Naive thymus-derived CD4-positive, alpha-beta T cell (primary cell): ENCODE measurements at regions of chr10 and their contacts with region 1.

Region 1: DNA sequence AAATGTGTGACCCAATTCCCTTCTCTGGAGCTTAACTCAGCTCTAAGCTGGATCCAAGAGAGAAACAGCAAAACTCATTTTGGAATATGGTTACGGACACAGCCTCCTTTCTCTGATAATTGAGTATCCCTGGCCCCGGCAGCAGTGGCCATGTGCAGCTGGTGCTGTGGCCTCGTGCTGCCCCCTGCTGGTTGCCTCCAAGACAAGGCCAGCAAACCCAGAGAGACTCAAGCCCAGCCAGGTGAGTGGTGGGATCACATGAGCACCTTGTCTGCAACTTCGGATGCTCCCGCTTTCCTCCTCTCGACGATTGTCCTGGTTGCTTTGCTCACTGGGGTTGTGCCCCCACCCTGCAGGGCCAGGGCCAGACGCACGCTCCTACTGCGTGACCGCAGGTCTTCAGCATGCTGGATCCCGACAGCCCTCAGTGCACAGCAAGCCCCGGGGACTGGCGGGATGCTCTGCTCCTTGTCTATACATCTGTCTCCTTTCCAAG is 19.4 kb downstream of the SFTPD start:
- DNase-seq: peak; percentile 27 to 81 (median 49)
- ATAC-seq: peak; percentile 84
- H3K4me3 ChIP-seq: no peak overlapping the region
- H3K4me3 Mint-ChIP-seq: no peak overlapping the region
- H3K27ac ChIP-seq: no peak overlapping the region
- H3K27ac Mint-ChIP-seq: no peak overlapping the region
- H3K4me1 ChIP-seq: no peaks in the 10 kb centered on the region
- H3K4me1 Mint-ChIP-seq: peaks cover 0 to 6% (median 0%) of the 10 kb centered on the region in 7 donors
- H3K27me3 ChIP-seq: no peaks in the 10 kb centered on the region
- H3K27me3 Mint-ChIP-seq: peaks cover 27 to 37% (median 33%) of the 10 kb centered on the region in 5 donors

Region 2: GRCh38 chr10:79542626-79543025 is 386.8 kb before region 1 on chr10:
- CTCF ChIA-PET with region 1: interaction called, 3 read pairs
- POLR2A ChIA-PET with region 1: no interaction called
- intact Hi-C with region 1: loop called (anchors 1 kb)
- DNase-seq: no peak
- ATAC-seq: peak; percentile 50
- H3K4me3 ChIP-seq: no peak overlapping the region
- H3K4me3 Mint-ChIP-seq: no peak overlapping the region
- H3K27ac ChIP-seq: no peak overlapping the region
- H3K27ac Mint-ChIP-seq: peak overlapping the region in 1 of 9 donors; percentile 3
- H3K4me1 ChIP-seq: peaks cover 0 to 2% of the 10 kb centered on the region in 2 donors
- H3K4me1 Mint-ChIP-seq: peaks cover 4 to 50% (median 10%) of the 10 kb centered on the region in 7 donors
- H3K27me3 ChIP-seq: no peaks in the 10 kb centered on the region
- H3K27me3 Mint-ChIP-seq: no peaks in the 10 kb centered on the region

Region 3: GRCh38 chr10:79562135-79562756 is 367.2 kb before region 1 on chr10:
- CTCF ChIA-PET with region 1: no interaction called
- POLR2A ChIA-PET with region 1: no interaction called
- intact Hi-C with region 1: loop called (anchors 1 kb)
- DNase-seq: peak; percentile 26 to 67 (median 48)
- ATAC-seq: peak; percentile 75
- H3K4me3 ChIP-seq: no peak overlapping the region
- H3K4me3 Mint-ChIP-seq: peak overlapping the region in 7 of 10 donors; percentile 1 to 53 (median 33)
- H3K27ac ChIP-seq: no peak overlapping the region
- H3K27ac Mint-ChIP-seq: no peak overlapping the region
- H3K4me1 ChIP-seq: no peaks in the 10 kb centered on the region
- H3K4me1 Mint-ChIP-seq: peaks cover 0 to 9% (median 7%) of the 10 kb centered on the region in 7 donors
- H3K27me3 ChIP-seq: no peaks in the 10 kb centered on the region
- H3K27me3 Mint-ChIP-seq: peaks cover 11 to 24% (median 23%) of the 10 kb centered on the region in 5 donors